Transverse colon (tissue), 4 donors: ENCODE measurements at regions of chr6 and their contacts with region 1.

Region 1: GRCh38 chr6:32868257-32868788 is 14.3 kb downstream of the PSMB9 start:
- DNase-seq: peak; percentile 86
- H3K4me3 ChIP-seq: no peak overlapping the region
- H3K27ac ChIP-seq: no peak overlapping the region
- H3K4me1 ChIP-seq: peaks cover 0 to 11% (median 1%) of the 10 kb centered on the region in 4 donors
- H3K27me3 ChIP-seq: peaks cover 12% of the 10 kb centered on the region
- CTCF ChIP-seq: peak; percentile 92 to 98 (median 96)
- EP300 ChIP-seq: no peak
- POLR2A ChIP-seq: no peak

Region 2: DNA sequence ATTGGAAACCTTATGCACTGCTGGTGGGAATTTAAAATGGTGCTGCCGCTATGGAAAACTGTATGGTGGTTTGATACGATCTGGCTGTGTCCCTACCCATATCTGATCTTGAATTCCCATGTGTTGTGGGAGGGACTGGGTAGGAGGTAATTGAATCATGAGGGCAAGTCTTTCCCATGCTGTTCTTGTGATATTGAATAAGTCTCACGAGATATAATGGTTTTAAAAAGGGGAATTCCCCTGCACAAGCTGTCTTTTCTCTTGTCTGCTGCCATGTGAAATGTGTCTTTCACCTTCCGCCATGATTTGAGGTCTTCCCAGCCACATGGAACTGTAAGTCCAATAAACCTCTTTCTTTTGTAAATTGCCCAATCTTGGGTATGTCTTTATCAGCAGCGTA is 34.7 kb before region 1 on chr6:
- in situ Hi-C with region 1: loop called in 1 of 4 experiments (anchors 5 kb)
- intact Hi-C with region 1: loop called (anchors 5 kb)
- DNase-seq: no peak
- H3K4me3 ChIP-seq: no peak overlapping the region
- H3K27ac ChIP-seq: no peak overlapping the region
- H3K4me1 ChIP-seq: peaks cover 3 to 9% (median 7%) of the 10 kb centered on the region in 4 donors
- H3K27me3 ChIP-seq: no peaks in the 10 kb centered on the region
- CTCF ChIP-seq: no peak
- EP300 ChIP-seq: no peak
- POLR2A ChIP-seq: no peak